Right lobe of liver (tissue), 6 donors: ENCODE measurements at regions of chr11 and their contacts with region 1.

Region 1: GRCh38 chr11:33996498-33997454 is 54.8 kb upstream of the CAPRIN1 start:
- DNase-seq: peak; percentile 52 to 78 (median 60)
- ATAC-seq: peak; percentile 99 to 100 (median 100)
- H3K4me3 ChIP-seq: no peak overlapping the region
- H3K27ac ChIP-seq: no peak overlapping the region
- H3K4me1 ChIP-seq: peaks cover 0 to 18% (median 0%) of the 10 kb centered on the region in 4 donors
- H3K27me3 ChIP-seq: no peaks in the 10 kb centered on the region
- CTCF ChIP-seq: peak; percentile 78 to 85 (median 82)
- POLR2A ChIP-seq: no peak

Region 2: GRCh38 chr11:33863418-33864172 is 133.2 kb before region 1 on chr11:
- intact Hi-C with region 1: loop called in 1 of 2 experiments (anchors 5 kb)
- DNase-seq: no peak
- ATAC-seq: no peak
- H3K4me3 ChIP-seq: no peak overlapping the region
- H3K27ac ChIP-seq: no peak overlapping the region
- H3K4me1 ChIP-seq: peaks cover 0 to 11% (median 0%) of the 10 kb centered on the region in 4 donors
- H3K27me3 ChIP-seq: no peaks in the 10 kb centered on the region
- CTCF ChIP-seq: no peak
- POLR2A ChIP-seq: no peak

Region 3: GRCh38 chr11:34105079-34105956 is 108.5 kb after region 1 on chr11 and contains the start of gene NAT10:
- intact Hi-C with region 1: loop called in 1 of 2 experiments (anchors 10 kb)
- DNase-seq: peak; percentile 95 to 97 (median 97)
- ATAC-seq: peak; percentile 94 to 98 (median 95)
- H3K4me3 ChIP-seq: peak within 1 kb of the TSS; percentile 86 to 94 (median 88)
- H3K27ac ChIP-seq: peak within 1 kb of the TSS; percentile 88 to 90 (median 90)
- H3K4me1 ChIP-seq: peaks cover 0 to 20% (median 2%) of the 10 kb centered on the region in 4 donors
- H3K27me3 ChIP-seq: no peaks in the 10 kb centered on the region
- CTCF ChIP-seq: peak in 2 of 4 donors; percentile 14 to 18
- POLR2A ChIP-seq: peak; percentile 79
- total RNA-seq, gene NAT10: 11.9 to 22.9 (median 19.1) TPM

Region 4: DNA sequence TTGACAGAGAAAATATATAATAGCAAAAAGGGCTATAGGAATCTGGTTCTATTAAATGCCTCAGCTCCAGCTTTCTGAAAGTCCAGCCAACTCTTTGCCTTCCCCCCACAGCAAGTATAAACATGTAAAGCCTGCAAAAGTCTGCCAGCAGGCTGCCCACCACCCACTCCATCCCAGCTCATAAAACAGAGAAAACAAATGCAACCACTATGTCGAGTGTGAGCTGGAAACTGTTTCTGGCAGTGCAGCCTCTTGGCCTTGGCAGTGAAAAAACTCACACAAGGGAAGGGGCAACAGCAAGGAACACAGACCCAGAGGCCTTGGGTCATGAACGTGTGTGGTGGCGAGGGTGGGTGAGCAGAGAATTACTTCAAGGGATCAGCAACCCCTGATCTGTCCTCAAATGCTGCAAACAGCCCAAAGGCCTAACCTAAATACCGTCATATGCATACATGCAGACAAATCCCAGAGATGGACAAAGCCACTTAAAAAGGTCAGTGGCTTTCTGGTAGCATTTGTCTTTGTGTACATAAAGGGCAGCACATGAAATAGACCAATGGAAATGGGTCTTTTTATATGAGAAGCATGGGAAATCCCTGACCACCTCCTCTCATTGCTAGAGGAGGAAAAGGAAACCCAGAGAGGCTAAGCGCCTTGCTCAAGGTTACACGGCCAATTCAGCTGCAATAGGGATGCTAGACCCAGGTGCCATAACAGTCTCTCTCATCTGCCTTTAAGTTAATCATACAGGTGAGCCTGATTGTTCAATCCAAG is 183.5 kb after region 1 on chr11:
- intact Hi-C with region 1: no loop called
- DNase-seq: no peak
- ATAC-seq: no peak
- H3K4me3 ChIP-seq: no peak overlapping the region
- H3K27ac ChIP-seq: no peak overlapping the region
- H3K4me1 ChIP-seq: peaks cover 0 to 12% (median 0%) of the 10 kb centered on the region in 4 donors
- H3K27me3 ChIP-seq: no peaks in the 10 kb centered on the region
- CTCF ChIP-seq: no peak
- POLR2A ChIP-seq: no peak